ENCODE measurements at regions of chr1 and their contacts with region 1.

Region 1: GRCh38 chr1:53278201-53278725 is 39.9 kb upstream of the MAGOH start:
- DNase-seq: peak; percentile 25
- H3K4me3 ChIP-seq: no peak overlapping the region
- H3K27ac ChIP-seq: no peak overlapping the region
- H3K4me1 ChIP-seq: no peaks in the 10 kb centered on the region
- H3K27me3 ChIP-seq: no peaks in the 10 kb centered on the region
- CTCF ChIP-seq: peak; percentile 70 to 91 (median 89)
- POLR2A ChIP-seq: no peak

Region 2: GRCh38 chr1:53047737-53048732 is 230.2 kb before region 1 on chr1:
- intact Hi-C with region 1: no loop called
- DNase-seq: no peak
- H3K4me3 ChIP-seq: no peak overlapping the region
- H3K27ac ChIP-seq: no peak overlapping the region
- H3K4me1 ChIP-seq: no peaks in the 10 kb centered on the region
- H3K27me3 ChIP-seq: no peaks in the 10 kb centered on the region
- CTCF ChIP-seq: no peak
- POLR2A ChIP-seq: no peak

Region 3: GRCh38 chr1:53104289-53104913 is 173.9 kb before region 1 on chr1:
- intact Hi-C with region 1: no loop called
- DNase-seq: no peak
- H3K4me3 ChIP-seq: no peak overlapping the region
- H3K27ac ChIP-seq: no peak overlapping the region
- H3K4me1 ChIP-seq: peaks cover 6% of the 10 kb centered on the region
- H3K27me3 ChIP-seq: no peaks in the 10 kb centered on the region
- CTCF ChIP-seq: no peak
- POLR2A ChIP-seq: no peak

Region 4: GRCh38 chr1:53249706-53250105 is 28.6 kb before region 1 on chr1:
- intact Hi-C with region 1: no loop called
- DNase-seq: no peak
- H3K4me3 ChIP-seq: no peak overlapping the region
- H3K27ac ChIP-seq: no peak overlapping the region
- H3K4me1 ChIP-seq: no peaks in the 10 kb centered on the region
- H3K27me3 ChIP-seq: no peaks in the 10 kb centered on the region
- CTCF ChIP-seq: no peak
- POLR2A ChIP-seq: no peak

Region 5: GRCh38 chr1:53393325-53393792 is 115.1 kb after region 1 on chr1:
- intact Hi-C with region 1: loop called (anchors 1 kb)
- DNase-seq: peak; percentile 80
- H3K4me3 ChIP-seq: no peak overlapping the region
- H3K27ac ChIP-seq: no peak overlapping the region
- H3K4me1 ChIP-seq: peaks cover 5% of the 10 kb centered on the region
- H3K27me3 ChIP-seq: no peaks in the 10 kb centered on the region
- CTCF ChIP-seq: peak; percentile 86 to 99 (median 96)
- POLR2A ChIP-seq: no peak

Measured in prostate gland (tissue), 2 donors.